A549 (cell line): ENCODE measurements at regions of chr20 and their contacts with region 1.

Region 1: GRCh38 chr20:10636326-10636818 is 37.4 kb downstream of the JAG1 start:
- DNase-seq: no peak
- ATAC-seq: peak; percentile 4 to 7; a peak in 2 of 6 replicates
- H3K4me3 ChIP-seq: no peak overlapping the region
- H3K27ac ChIP-seq: peak overlapping the region in 1 of 2 experiments; percentile 18; a peak in 3 of 6 replicates
- H3K4me1 ChIP-seq: peaks cover 52% of the 10 kb centered on the region
- CTCF ChIP-seq: no peak
- EP300 ChIP-seq: no peak
- POLR2A ChIP-seq: no peak
- RAD21 ChIP-seq: peak in 1 of 2 experiments; percentile 22; a peak in 1 of 5 replicates

Region 2: GRCh38 chr20:10609276-10610169 is 26.8 kb before region 1 on chr20:
- CTCF ChIA-PET with region 1: interaction called, 10 read pairs
- POLR2A ChIA-PET with region 1: no interaction called
- DNase-seq: no peak
- ATAC-seq: no peak
- H3K4me3 ChIP-seq: no peak overlapping the region
- H3K27ac ChIP-seq: peak overlapping the region; percentile 22 to 49; a peak in 4 of 6 replicates
- H3K4me1 ChIP-seq: peaks cover 24% of the 10 kb centered on the region
- CTCF ChIP-seq: no peak
- EP300 ChIP-seq: no peak
- POLR2A ChIP-seq: no peak
- RAD21 ChIP-seq: no peak

Region 3: GRCh38 chr20:10622657-10623418 is 13.5 kb before region 1 on chr20:
- CTCF ChIA-PET with region 1: interaction called, 10 read pairs
- POLR2A ChIA-PET with region 1: interaction called, 4 read pairs
- DNase-seq: no peak
- ATAC-seq: no peak; a peak in 1 of 6 replicates
- H3K4me3 ChIP-seq: no peak overlapping the region
- H3K27ac ChIP-seq: 0 out of 6 replicates have a peak overlapping the region, but pooled peaks of 1 of the 2 experiments have one; percentile 1
- H3K4me1 ChIP-seq: peaks cover 15% of the 10 kb centered on the region; the same call in 2 of the 3 replicates
- CTCF ChIP-seq: no peak
- EP300 ChIP-seq: no peak
- POLR2A ChIP-seq: no peak
- RAD21 ChIP-seq: no peak

Region 4: DNA sequence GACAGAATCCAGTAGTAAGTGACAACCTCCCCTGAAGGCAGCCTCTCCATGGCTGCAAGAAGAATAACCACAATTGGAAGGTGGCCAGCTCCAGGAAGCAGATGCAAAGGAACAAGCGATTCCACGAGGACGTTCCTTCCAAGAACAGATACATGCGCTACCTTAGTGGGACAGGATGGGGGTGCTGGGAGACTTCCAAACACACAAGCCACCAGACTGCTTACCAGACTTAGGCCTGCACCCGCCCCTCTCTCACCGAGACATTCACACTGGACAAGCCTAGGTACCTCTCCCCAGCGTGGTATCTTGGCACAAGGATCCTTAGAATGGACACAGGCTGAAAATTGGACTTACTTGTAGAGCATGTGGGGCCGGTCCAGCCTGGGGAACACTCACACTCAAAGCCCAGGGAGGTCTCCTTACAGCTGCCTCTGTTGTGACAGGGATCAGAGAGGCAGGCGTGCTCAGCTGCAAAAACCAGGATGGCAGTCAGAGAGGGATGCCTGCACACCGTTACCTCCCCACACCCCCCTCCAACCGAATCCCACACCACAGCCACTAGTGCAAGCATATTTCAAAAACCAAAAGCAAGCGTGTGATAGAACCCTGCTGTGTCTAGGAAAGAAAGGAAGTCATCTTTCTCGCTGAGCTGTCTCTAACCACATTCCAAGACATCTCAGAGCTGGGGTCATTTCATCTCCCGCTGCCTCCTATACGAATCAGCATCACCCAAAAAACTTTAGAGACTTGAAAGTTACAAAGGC is 15.0 kb after region 1 on chr20:
- CTCF ChIA-PET with region 1: interaction called, 19 read pairs
- POLR2A ChIA-PET with region 1: interaction called, 3 read pairs
- DNase-seq: no peak
- ATAC-seq: peak in 1 of 2 experiments; percentile 19; a peak in 3 of 6 replicates
- H3K4me3 ChIP-seq: no peak overlapping the region
- H3K27ac ChIP-seq: 0 out of 6 replicates have a peak overlapping the region, but pooled peaks of 1 of the 2 experiments have one; percentile 2
- H3K4me1 ChIP-seq: peaks cover 26% of the 10 kb centered on the region; the same call in 2 of the 3 replicates
- CTCF ChIP-seq: no peak
- EP300 ChIP-seq: no peak
- POLR2A ChIP-seq: no peak
- RAD21 ChIP-seq: peak in 1 of 2 experiments; percentile 14; a peak in 1 of 5 replicates

Region 5: GRCh38 chr20:10715035-10715434 is 78.7 kb after region 1 on chr20:
- CTCF ChIA-PET with region 1: no interaction called
- POLR2A ChIA-PET with region 1: no interaction called
- DNase-seq: peak; percentile 68 to 72
- ATAC-seq: peak; percentile 62 to 73; a peak in 5 of 6 replicates
- H3K4me3 ChIP-seq: no peak overlapping the region
- H3K27ac ChIP-seq: peak overlapping the region; percentile 85 to 86
- H3K4me1 ChIP-seq: peaks cover 93% of the 10 kb centered on the region
- CTCF ChIP-seq: no peak
- EP300 ChIP-seq: peak; percentile 25 to 49; a peak in 1 of 5 replicates
- POLR2A ChIP-seq: no peak
- RAD21 ChIP-seq: peak; percentile 43 to 49; a peak in 3 of 5 replicates